Aorta (tissue), 5 donors: ENCODE measurements at regions of chr18 and their contacts with region 1.

Region 1: GRCh38 chr18:40769786-40770185 is 1185.2 kb upstream of the PIK3C3 start:
- DNase-seq: no peak
- ATAC-seq: no peak
- H3K4me3 ChIP-seq: no peak overlapping the region
- H3K27ac ChIP-seq: no peak overlapping the region
- H3K4me1 ChIP-seq: no peaks in the 10 kb centered on the region
- H3K27me3 ChIP-seq: no peaks in the 10 kb centered on the region

Region 2: DNA sequence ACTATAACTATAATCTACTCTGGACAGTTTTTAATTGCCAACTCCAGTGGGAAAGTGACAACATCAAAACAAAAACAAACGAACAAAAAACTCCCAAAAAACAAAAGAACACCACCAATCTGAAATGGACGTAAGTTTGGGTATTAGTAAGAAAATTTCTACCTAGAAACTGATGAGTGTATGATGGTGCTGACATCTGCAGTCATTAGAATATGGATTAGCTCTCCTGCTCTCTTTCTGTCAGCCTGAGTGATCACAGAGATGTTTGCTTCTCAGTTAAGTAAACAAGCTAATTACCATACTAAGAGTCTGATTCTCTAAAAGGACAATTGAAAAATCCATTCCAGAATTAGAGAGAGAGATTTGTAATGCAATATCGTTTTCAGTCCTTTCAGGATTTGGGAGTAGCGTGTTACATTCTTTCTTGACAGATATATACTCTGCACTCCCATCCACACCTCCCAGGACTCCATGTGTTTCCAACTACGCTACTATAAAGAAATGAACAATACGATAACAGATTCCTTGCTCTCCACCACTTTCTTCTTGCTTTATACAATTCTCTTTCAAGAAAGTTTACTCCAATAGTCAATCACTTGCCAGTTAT is 162.1 kb before region 1 on chr18:
- intact Hi-C with region 1: no loop called
- DNase-seq: no peak
- ATAC-seq: no peak
- H3K4me3 ChIP-seq: no peak overlapping the region
- H3K27ac ChIP-seq: no peak overlapping the region
- H3K4me1 ChIP-seq: no peaks in the 10 kb centered on the region
- H3K27me3 ChIP-seq: no peaks in the 10 kb centered on the region

Region 3: GRCh38 chr18:40810371-40810770 is 40.6 kb after region 1 on chr18:
- intact Hi-C with region 1: loop called in 1 of 2 experiments (anchors 2 kb)
- DNase-seq: no peak
- ATAC-seq: no peak
- H3K4me3 ChIP-seq: no peak overlapping the region
- H3K27ac ChIP-seq: no peak overlapping the region
- H3K4me1 ChIP-seq: no peaks in the 10 kb centered on the region
- H3K27me3 ChIP-seq: no peaks in the 10 kb centered on the region

Region 4: GRCh38 chr18:41052625-41053024 is 282.8 kb after region 1 on chr18:
- intact Hi-C with region 1: no loop called
- DNase-seq: no peak
- ATAC-seq: no peak
- H3K4me3 ChIP-seq: no peak overlapping the region
- H3K27ac ChIP-seq: no peak overlapping the region
- H3K4me1 ChIP-seq: no peaks in the 10 kb centered on the region
- H3K27me3 ChIP-seq: no peaks in the 10 kb centered on the region